Caco-2 (cell line): ENCODE measurements at regions of chr5 and their contacts with region 1.

Region 1: GRCh38 chr5:122156724-122157325 is 27.5 kb downstream of the ZNF474 start:
- DNase-seq: peak in 1 of 2 experiments; percentile 14
- H3K4me3 ChIP-seq: no peak overlapping the region
- H3K4me3 Mint-ChIP-seq: no peak overlapping the region
- H3K27ac Mint-ChIP-seq: no peak overlapping the region
- H3K4me1 ChIP-seq: no peaks in the 10 kb centered on the region
- H3K4me1 Mint-ChIP-seq: no peaks in the 10 kb centered on the region
- H3K27me3 ChIP-seq: no peaks in the 10 kb centered on the region
- H3K27me3 Mint-ChIP-seq: peaks cover 12% of the 10 kb centered on the region
- CTCF ChIP-seq: peak; percentile 17 to 30

Region 2: GRCh38 chr5:122091936-122092600 is 64.8 kb before region 1 on chr5:
- CTCF ChIA-PET with region 1: no interaction called
- POLR2A ChIA-PET with region 1: no interaction called
- intact Hi-C with region 1: loop called (anchors 1 kb)
- DNase-seq: peak in 1 of 2 experiments; percentile 18
- H3K4me3 ChIP-seq: no peak overlapping the region
- H3K4me3 Mint-ChIP-seq: no peak overlapping the region
- H3K27ac Mint-ChIP-seq: no peak overlapping the region
- H3K4me1 ChIP-seq: no peaks in the 10 kb centered on the region
- H3K4me1 Mint-ChIP-seq: no peaks in the 10 kb centered on the region
- H3K27me3 ChIP-seq: no peaks in the 10 kb centered on the region; the same call in 1 of the 2 replicates
- H3K27me3 Mint-ChIP-seq: peaks cover 10% of the 10 kb centered on the region
- CTCF ChIP-seq: peak in 1 of 2 experiments; percentile 58